Left ventricle myocardium inferior (tissue), 1 donor: ENCODE measurements at regions of chr7 and their contacts with region 1.

Region 1: GRCh38 chr7:131935180-131935579 is 378.8 kb upstream of the PODXL start:
- DNase-seq: no peak
- H3K4me3 ChIP-seq: no peak overlapping the region
- H3K27ac ChIP-seq: no peak overlapping the region
- H3K4me1 ChIP-seq: no peaks in the 10 kb centered on the region
- H3K27me3 ChIP-seq: peaks cover 43% of the 10 kb centered on the region
- CTCF ChIP-seq: no peak

Region 2: DNA sequence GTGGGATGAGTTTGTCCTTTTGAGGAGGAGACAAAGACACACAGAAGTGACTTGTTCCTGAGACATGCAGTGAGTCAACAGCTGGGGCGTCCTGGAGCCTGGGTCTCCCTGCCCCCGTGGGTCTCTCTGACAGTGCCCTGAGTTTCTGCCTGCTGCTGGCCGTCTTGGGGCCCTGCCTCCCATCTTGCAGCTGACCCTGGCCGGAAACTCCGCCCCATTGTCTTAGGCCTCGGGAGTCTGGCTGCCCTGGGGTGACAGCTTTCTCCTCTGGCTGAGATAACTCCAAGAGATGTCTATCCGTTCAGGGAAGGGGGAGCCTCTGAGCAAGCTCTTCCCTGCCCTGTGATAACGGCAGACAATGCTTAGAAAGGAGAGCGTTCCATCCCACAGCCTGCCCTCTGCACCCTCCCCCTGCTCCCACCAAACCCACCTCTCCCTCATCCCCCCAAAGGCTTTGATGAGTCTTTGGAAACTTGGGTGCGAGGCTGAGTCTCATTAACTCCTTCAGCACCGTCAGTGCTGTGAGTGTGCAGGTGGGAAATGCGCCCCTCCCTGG is 309.3 kb before region 1 on chr7:
- intact Hi-C with region 1: no loop called
- DNase-seq: peak; percentile 64
- H3K4me3 ChIP-seq: no peak overlapping the region
- H3K27ac ChIP-seq: peak overlapping the region; percentile 85
- H3K4me1 ChIP-seq: peaks cover 100% of the 10 kb centered on the region
- H3K27me3 ChIP-seq: no peaks in the 10 kb centered on the region
- CTCF ChIP-seq: no peak

Region 3: GRCh38 chr7:131974671-131975070 is 39.5 kb after region 1 on chr7:
- intact Hi-C with region 1: no loop called
- DNase-seq: no peak
- H3K4me3 ChIP-seq: no peak overlapping the region
- H3K27ac ChIP-seq: no peak overlapping the region
- H3K4me1 ChIP-seq: no peaks in the 10 kb centered on the region
- H3K27me3 ChIP-seq: peaks cover 10% of the 10 kb centered on the region
- CTCF ChIP-seq: no peak

Region 4: DNA sequence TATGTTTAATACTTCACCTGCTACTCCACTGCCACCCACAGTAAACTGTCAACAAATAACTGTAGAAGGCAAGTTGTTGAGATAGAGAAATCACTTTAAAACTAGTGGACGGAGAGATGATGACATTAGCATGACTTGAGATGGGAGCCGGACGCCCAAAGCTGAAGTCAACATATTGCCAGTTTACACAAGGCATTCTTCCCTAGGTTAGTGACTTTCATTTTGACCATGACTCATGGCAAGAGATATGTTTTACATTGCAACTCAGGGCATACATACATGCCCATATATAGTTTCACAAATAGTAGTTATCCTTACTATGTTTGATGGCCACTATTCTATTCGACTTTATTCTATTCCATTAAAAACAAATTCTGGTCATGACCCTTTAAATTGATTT is 344.5 kb after region 1 on chr7:
- intact Hi-C with region 1: no loop called
- DNase-seq: no peak
- H3K4me3 ChIP-seq: no peak overlapping the region
- H3K27ac ChIP-seq: no peak overlapping the region
- H3K4me1 ChIP-seq: peaks cover 10% of the 10 kb centered on the region
- H3K27me3 ChIP-seq: no peaks in the 10 kb centered on the region
- CTCF ChIP-seq: no peak

Region 5: GRCh38 chr7:132580717-132581285 is 645.6 kb after region 1 on chr7:
- intact Hi-C with region 1: loop called (anchors 5 kb)
- DNase-seq: peak; percentile 64
- H3K4me3 ChIP-seq: no peak overlapping the region
- H3K27ac ChIP-seq: no peak overlapping the region
- H3K4me1 ChIP-seq: peaks cover 14% of the 10 kb centered on the region
- H3K27me3 ChIP-seq: peaks cover 23% of the 10 kb centered on the region
- CTCF ChIP-seq: peak; percentile 81